HCT116 (cell line): ENCODE measurements at regions of chr1 and their contacts with region 1.

Region 1: DNA sequence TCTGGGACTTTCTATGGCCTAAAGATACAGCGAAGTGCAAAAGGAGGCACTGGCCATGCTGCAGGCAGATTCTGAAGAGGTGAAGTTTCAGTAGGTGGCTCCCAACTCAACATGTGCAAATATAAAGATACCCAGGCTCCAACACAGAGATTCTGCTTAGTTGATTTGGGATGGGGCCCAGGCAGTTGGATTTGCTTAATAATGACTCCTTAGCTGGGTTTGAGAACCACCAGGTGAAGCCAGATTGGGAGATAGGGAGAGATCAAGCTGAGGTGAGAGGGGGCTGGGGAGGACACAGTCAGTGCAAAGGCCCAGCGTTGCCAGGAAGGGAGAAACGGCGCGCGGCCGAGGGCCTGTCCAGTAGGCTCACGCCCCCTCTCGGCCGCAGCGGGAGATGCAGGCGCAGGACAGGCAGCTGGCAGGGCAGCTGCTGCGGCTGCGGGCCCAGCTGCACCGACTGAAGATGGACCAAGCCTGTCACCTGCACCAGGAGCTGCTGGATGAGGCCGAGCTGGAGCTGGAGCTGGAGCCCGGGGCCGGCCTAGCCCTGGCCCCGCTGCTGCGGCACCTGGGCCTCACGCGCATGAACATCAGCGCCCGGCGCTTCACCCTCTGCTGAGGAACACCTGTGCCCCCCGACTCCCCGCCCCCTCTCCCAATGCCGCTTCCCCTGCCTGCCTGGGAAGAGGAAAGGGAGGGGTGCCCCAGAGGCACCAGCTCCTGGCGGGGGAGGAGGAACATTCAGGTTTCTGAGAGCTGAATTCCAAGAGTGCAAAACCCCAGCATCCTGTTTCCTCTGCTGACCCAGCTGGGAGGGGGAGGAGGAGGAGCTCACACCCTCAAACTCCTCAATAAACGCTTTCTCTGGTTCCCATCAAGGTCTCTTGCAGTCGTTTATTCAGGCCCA is 1.2 kb downstream of the FAM167B start:
- DNase-seq: no peak
- ATAC-seq: peak; percentile 96
- H3K4me3 ChIP-seq: no peak overlapping the region
- H3K27ac ChIP-seq: no peak overlapping the region
- H3K4me1 ChIP-seq: peaks cover 0 to 16% of the 10 kb centered on the region in 2 experiments; a peak in 3 of 4 replicates
- H3K27me3 ChIP-seq: no peaks in the 10 kb centered on the region
- CTCF ChIP-seq: peak; percentile 73 to 96 (median 85)
- POLR2A ChIP-seq: no peak
- RAD21 ChIP-seq: peak; percentile 82

Region 2: GRCh38 chr1:32263744-32264143 is 15.5 kb after region 1 on chr1:
- CTCF ChIA-PET with region 1: interaction called, 10 read pairs
- POLR2A ChIA-PET with region 1: no interaction called
- RAD21 ChIA-PET with region 1: no interaction called
- intact Hi-C with region 1: no loop called
- DNase-seq: no peak
- ATAC-seq: no peak
- H3K4me3 ChIP-seq: no peak overlapping the region
- H3K27ac ChIP-seq: no peak overlapping the region
- H3K4me1 ChIP-seq: peaks cover 3 to 18% of the 10 kb centered on the region in 2 experiments
- H3K27me3 ChIP-seq: no peaks in the 10 kb centered on the region
- CTCF ChIP-seq: no peak
- POLR2A ChIP-seq: no peak
- RAD21 ChIP-seq: no peak